ENCODE measurements at regions of chr6 and their contacts with region 1.

Region 1: GRCh38 chr6:137811121-137811915 is 55.7 kb upstream of the TNFAIP3 start:
- DNase-seq: peak; percentile 76 to 84
- H3K4me3 ChIP-seq: no peak overlapping the region
- H3K27ac ChIP-seq: peak overlapping the region; percentile 5 to 39
- H3K4me1 ChIP-seq: no peaks in the 10 kb centered on the region
- H3K27me3 ChIP-seq: no peaks in the 10 kb centered on the region
- CTCF ChIP-seq: no peak

Region 2: GRCh38 chr6:137722749-137723272 is 88.5 kb before region 1 on chr6:
- intact Hi-C with region 1: loop called (anchors 5 kb)
- DNase-seq: no peak
- H3K4me3 ChIP-seq: no peak overlapping the region
- H3K27ac ChIP-seq: no peak overlapping the region
- H3K4me1 ChIP-seq: no peaks in the 10 kb centered on the region
- H3K27me3 ChIP-seq: no peaks in the 10 kb centered on the region
- CTCF ChIP-seq: no peak

Measured in ascending aorta (tissue), 2 donors.